A673 (cell line): ENCODE measurements at regions of chr13 and their contacts with region 1.

Region 1: GRCh38 chr13:102452831-102453230 is 51.0 kb upstream of the FGF14 start:
- DNase-seq: no peak
- H3K4me3 ChIP-seq: no peak overlapping the region
- H3K27ac ChIP-seq: no peak overlapping the region
- H3K4me1 ChIP-seq: peaks cover 6% of the 10 kb centered on the region
- H3K27me3 ChIP-seq: no peaks in the 10 kb centered on the region
- CTCF ChIP-seq: no peak

Region 2: GRCh38 chr13:102141625-102142472 is 311.0 kb before region 1 on chr13:
- CTCF ChIA-PET with region 1: no interaction called
- POLR2A ChIA-PET with region 1: interaction called, 11 read pairs
- intact Hi-C with region 1: loop called (anchors 2 kb)
- DNase-seq: peak; percentile 66
- H3K4me3 ChIP-seq: no peak overlapping the region
- H3K27ac ChIP-seq: no peak overlapping the region
- H3K4me1 ChIP-seq: peaks cover 23% of the 10 kb centered on the region
- H3K27me3 ChIP-seq: no peaks in the 10 kb centered on the region
- CTCF ChIP-seq: peak; percentile 87